Activated CD4-positive, alpha-beta T cell treated with anti-CD3 and anti-CD28 coated beads for 36 hours (primary cell): ENCODE measurements at regions of chr20 and their contacts with region 1.

Region 1: DNA sequence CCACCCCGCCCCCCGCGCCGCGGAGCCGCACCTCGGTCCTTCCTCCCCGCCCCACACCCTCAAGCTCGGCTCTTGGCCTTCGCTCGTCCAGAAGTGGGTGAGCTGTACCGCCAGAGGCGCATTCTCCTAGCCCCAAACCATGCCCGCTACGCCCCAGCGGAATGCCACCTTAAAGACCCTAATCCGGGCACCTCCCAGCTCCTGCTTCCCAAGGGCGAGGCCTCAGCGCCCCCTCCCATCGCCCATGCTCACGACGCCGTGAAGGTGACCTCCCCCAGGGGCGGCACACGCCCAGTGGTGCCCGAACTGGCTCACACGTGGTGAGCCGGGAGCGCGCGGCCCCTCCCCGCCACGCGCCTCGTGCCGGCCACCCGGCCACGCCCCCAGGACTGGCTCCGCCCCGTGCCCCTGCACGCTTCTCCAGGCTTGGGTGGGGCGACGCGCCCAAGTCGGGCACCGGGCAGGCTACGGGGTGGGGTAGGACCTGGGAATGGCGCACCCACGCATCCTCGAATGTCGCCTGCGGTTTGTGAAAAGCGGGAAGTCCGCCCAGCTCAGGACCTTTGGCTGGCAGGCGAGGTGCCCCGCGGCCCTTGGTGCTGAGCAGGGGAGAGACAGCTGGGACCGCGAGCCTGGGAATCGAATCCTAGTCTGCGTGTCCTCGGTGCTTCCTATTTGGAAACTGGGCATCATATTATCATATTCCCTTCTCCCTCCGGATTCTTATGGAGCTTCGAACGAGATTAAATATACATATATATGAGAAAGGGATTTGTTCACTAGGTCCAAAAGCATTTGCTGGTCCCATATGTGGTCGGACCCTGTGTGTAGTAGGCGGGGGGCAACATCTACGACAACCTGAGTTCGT is 941 bp upstream of the SOX12 start:
- DNase-seq: peak; percentile 93
- ATAC-seq: peak; percentile 62
- H3K4me3 Mint-ChIP-seq: peak overlapping the region; percentile 80
- H3K27ac Mint-ChIP-seq: peak overlapping the region; percentile 83
- H3K4me1 Mint-ChIP-seq: peaks cover 13% of the 10 kb centered on the region
- H3K27me3 Mint-ChIP-seq: no peaks in the 10 kb centered on the region

Region 2: GRCh38 chr20:266596-267562 is 57.5 kb before region 1 on chr20:
- CTCF ChIA-PET with region 1: interaction called, 24 read pairs
- POLR2A ChIA-PET with region 1: no interaction called
- intact Hi-C with region 1: loop called in 1 of 2 experiments (anchors 2 kb)
- DNase-seq: peak; percentile 96
- ATAC-seq: peak; percentile 96
- H3K4me3 Mint-ChIP-seq: peak overlapping the region; percentile 70
- H3K27ac Mint-ChIP-seq: peak overlapping the region; percentile 71
- H3K4me1 Mint-ChIP-seq: peaks cover 7% of the 10 kb centered on the region
- H3K27me3 Mint-ChIP-seq: peaks cover 4% of the 10 kb centered on the region

Region 3: DNA sequence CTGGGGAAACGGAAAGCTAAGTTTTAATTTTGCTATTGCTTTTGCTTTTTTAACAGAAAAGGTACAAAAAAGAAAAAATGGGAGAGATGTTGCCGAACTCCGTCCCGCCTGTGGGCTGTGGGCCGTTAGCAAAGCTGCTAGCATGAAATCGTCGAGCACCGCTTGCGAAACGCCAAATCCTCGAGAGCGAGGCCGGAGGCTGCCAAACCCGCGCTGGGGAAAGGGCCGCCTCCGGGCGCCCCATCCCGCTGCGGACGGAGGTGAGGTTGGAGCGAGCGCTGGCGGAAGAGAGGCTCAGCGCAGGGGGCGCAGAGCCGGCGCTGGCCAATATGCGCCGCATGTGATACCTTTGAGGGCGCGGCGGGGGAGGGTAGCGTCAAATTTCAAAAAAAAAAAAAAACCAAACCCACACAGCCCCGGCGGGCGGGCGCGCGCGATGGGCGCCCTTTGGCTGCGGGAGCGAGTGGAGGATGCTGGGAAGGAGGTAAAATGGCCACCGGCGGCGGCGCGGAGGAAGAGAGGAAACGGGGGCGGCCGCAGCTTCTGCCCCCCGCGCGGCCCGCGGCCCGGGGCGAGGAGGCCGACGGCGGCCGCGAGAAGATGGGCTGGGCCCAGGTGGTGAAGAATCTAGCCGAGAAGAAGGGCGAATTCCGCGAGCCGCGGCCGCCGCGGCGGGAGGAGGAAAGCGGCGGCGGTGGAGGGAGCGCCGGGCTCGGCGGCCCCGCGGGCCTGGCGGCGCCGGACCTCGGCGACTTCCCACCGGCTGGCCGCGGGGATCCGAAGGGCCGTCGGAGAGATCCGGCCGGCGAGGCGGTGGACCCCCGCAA is 27.1 kb before region 1 on chr20 and contains the start of gene ZCCHC3:
- CTCF ChIA-PET with region 1: interaction called, 40 read pairs
- POLR2A ChIA-PET with region 1: interaction called, 7 read pairs
- intact Hi-C with region 1: loop called (anchors 1 kb)
- DNase-seq: peak; percentile 92
- ATAC-seq: peak; percentile 81
- H3K4me3 Mint-ChIP-seq: peak within 1 kb of the TSS; percentile 100
- H3K27ac Mint-ChIP-seq: peak within 1 kb of the TSS; percentile 99
- H3K4me1 Mint-ChIP-seq: peaks cover 44% of the 10 kb centered on the region
- H3K27me3 Mint-ChIP-seq: no peaks in the 10 kb centered on the region
- total RNA-seq, gene ZCCHC3: 15.6 to 16.4 TPM

Region 4: GRCh38 chr20:347640-348484 is 23.5 kb after region 1 on chr20:
- CTCF ChIA-PET with region 1: interaction called, 16 read pairs
- POLR2A ChIA-PET with region 1: no interaction called
- intact Hi-C with region 1: loop called in 1 of 2 experiments (anchors 1 kb)
- DNase-seq: peak; percentile 78
- ATAC-seq: peak; percentile 76
- H3K4me3 Mint-ChIP-seq: peak overlapping the region; percentile 82
- H3K27ac Mint-ChIP-seq: peak overlapping the region; percentile 42
- H3K4me1 Mint-ChIP-seq: peaks cover 10% of the 10 kb centered on the region
- H3K27me3 Mint-ChIP-seq: no peaks in the 10 kb centered on the region

Region 5: GRCh38 chr20:407133-407952 is 82.9 kb after region 1 on chr20:
- CTCF ChIA-PET with region 1: interaction called, 4 read pairs
- POLR2A ChIA-PET with region 1: no interaction called
- intact Hi-C with region 1: loop called in 1 of 2 experiments (anchors 1 kb)
- DNase-seq: peak; percentile 87
- ATAC-seq: peak; percentile 74
- H3K4me3 Mint-ChIP-seq: peak overlapping the region; percentile 78
- H3K27ac Mint-ChIP-seq: peak overlapping the region; percentile 87
- H3K4me1 Mint-ChIP-seq: peaks cover 43% of the 10 kb centered on the region
- H3K27me3 Mint-ChIP-seq: no peaks in the 10 kb centered on the region

Region 6: DNA sequence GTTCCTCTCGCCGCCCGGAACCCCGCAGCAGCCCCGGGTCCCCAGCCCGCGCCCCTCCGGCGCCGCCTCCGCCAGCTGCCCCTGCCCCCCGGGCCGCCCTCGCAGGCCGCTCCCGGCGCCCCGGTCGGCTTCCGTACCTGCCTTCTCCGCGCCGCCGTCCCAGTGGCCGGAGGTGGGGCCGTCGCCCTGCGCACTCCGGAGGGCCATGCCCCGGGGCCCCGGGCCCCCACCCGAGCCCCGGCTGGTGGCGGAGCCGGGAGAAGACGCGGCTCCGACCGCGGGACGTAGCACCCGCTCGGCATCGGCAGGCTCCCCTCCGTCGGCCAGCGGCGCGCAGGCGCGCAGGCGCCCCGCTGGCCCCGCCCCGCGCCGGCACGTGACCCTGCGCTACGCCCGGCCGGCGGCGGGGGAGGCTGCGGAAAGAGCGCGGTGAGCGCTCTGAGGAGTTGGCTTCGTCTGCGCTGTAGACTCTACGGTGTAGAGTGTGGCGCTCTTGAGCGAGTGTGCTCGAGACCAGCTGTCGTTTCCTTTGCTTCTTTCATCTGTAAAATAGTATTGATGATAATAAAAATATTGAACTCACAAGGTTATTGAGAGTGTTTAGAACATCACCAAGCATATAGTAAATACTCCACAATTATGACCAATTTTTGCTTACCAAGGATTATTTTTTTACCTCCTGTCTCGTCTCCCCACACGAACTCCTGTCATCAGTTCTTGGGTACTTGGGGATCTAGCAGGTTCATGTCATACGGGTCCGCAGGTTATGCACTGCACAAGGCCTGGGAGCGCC is 138.0 kb after region 1 on chr20 and contains the start of gene TBC1D20:
- CTCF ChIA-PET with region 1: no interaction called
- POLR2A ChIA-PET with region 1: no interaction called
- intact Hi-C with region 1: loop called in 1 of 2 experiments (anchors 1 kb)
- DNase-seq: peak; percentile 92
- ATAC-seq: peak; percentile 97
- H3K4me3 Mint-ChIP-seq: peak within 1 kb of the TSS; percentile 95
- H3K27ac Mint-ChIP-seq: peak within 1 kb of the TSS; percentile 94
- H3K4me1 Mint-ChIP-seq: peaks cover 42% of the 10 kb centered on the region
- H3K27me3 Mint-ChIP-seq: no peaks in the 10 kb centered on the region
- total RNA-seq, gene TBC1D20: 20.9 to 25.2 TPM

Region 7: GRCh38 chr20:833450-834150 is 509.2 kb after region 1 on chr20 and contains the start of gene FAM110A:
- CTCF ChIA-PET with region 1: no interaction called
- POLR2A ChIA-PET with region 1: no interaction called
- intact Hi-C with region 1: loop called in 1 of 2 experiments (anchors 5 kb)
- DNase-seq: peak; percentile 98
- ATAC-seq: peak; percentile 89
- H3K4me3 Mint-ChIP-seq: peak within 1 kb of the TSS; percentile 88
- H3K27ac Mint-ChIP-seq: peak within 1 kb of the TSS; percentile 86
- H3K4me1 Mint-ChIP-seq: peaks cover 38% of the 10 kb centered on the region
- H3K27me3 Mint-ChIP-seq: no peaks in the 10 kb centered on the region
- total RNA-seq, gene FAM110A: 15.5 TPM